ENCODE measurements at regions of chr20 and their contacts with region 1.

Region 1: GRCh38 chr20:35883778-35884540 is 70.3 kb downstream of the SCAND1 start:
- DNase-seq: peak; percentile 69 to 87 (median 77)
- H3K4me3 ChIP-seq: no peak overlapping the region
- H3K27ac ChIP-seq: peak overlapping the region; percentile 14 to 51
- H3K4me1 ChIP-seq: peaks cover 2% of the 10 kb centered on the region
- H3K27me3 ChIP-seq: no peaks in the 10 kb centered on the region
- CTCF ChIP-seq: peak; percentile 36 to 78 (median 73)
- EP300 ChIP-seq: peak; percentile 93
- POLR2A ChIP-seq: peak; percentile 11

Region 2: DNA sequence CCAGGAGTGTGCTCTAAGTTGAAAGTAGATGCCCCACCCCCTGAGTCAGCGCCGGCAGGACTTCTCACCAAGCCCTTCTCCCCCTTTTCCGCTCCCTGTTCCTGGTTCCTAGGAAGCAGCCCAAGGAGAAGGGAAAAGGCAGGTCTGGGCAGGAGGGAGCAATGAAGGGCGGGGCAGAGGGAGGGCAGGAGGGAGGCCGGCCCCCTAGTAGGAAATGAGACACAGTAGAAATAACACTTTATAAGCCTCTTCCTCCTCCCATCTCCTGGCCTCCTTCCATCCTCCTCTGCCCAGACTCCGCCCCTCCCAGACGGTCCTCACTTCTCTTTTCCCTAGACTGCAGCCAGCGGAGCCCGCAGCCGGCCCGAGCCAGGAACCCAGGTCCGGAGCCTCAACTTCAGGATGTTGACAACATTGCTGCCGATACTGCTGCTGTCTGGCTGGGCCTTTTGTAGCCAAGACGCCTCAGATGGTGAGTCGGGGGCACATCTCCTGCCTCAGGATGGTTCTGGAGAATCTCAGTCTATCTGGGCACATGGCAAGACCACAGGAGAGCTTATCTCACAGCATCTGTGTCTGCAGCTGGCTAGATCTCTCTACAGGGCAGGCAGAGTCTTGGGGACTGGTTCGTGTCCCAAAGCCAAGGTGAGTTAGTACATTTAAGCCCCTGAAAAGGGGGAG is 712.1 kb before region 1 on chr20 and contains the start of gene PROCR:
- intact Hi-C with region 1: loop called in 1 of 4 experiments (anchors 5 kb)
- DNase-seq: peak; percentile 86 to 89 (median 87)
- H3K4me3 ChIP-seq: peak within 1 kb of the TSS; percentile 33
- H3K27ac ChIP-seq: peak within 1 kb of the TSS in 1 of 2 donors; percentile 66
- H3K4me1 ChIP-seq: peaks cover 2% of the 10 kb centered on the region
- H3K27me3 ChIP-seq: no peaks in the 10 kb centered on the region
- CTCF ChIP-seq: no peak
- EP300 ChIP-seq: no peak
- POLR2A ChIP-seq: no peak
- total RNA-seq, gene PROCR: 9.1 to 38.4 (median 17.5) TPM

Region 3: GRCh38 chr20:35463455-35464300 is 420.3 kb before region 1 on chr20:
- intact Hi-C with region 1: loop called in 1 of 4 experiments (anchors 10 kb)
- DNase-seq: peak in 4 of 5 donors; percentile 39 to 72 (median 44)
- H3K4me3 ChIP-seq: no peak overlapping the region
- H3K27ac ChIP-seq: no peak overlapping the region
- H3K4me1 ChIP-seq: peaks cover 4% of the 10 kb centered on the region
- H3K27me3 ChIP-seq: no peaks in the 10 kb centered on the region
- CTCF ChIP-seq: peak; percentile 63 to 69 (median 63)
- EP300 ChIP-seq: no peak
- POLR2A ChIP-seq: no peak

Region 4: GRCh38 chr20:35601008-35601973 is 282.7 kb before region 1 on chr20:
- intact Hi-C with region 1: loop called in 1 of 4 experiments (anchors 10 kb)
- DNase-seq: peak; percentile 74 to 88 (median 82)
- H3K4me3 ChIP-seq: peak overlapping the region; percentile 38
- H3K27ac ChIP-seq: no peak overlapping the region
- H3K4me1 ChIP-seq: peaks cover 6% of the 10 kb centered on the region
- H3K27me3 ChIP-seq: no peaks in the 10 kb centered on the region
- CTCF ChIP-seq: peak in 2 of 3 donors; percentile 48 to 54
- EP300 ChIP-seq: no peak
- POLR2A ChIP-seq: no peak

Region 5: DNA sequence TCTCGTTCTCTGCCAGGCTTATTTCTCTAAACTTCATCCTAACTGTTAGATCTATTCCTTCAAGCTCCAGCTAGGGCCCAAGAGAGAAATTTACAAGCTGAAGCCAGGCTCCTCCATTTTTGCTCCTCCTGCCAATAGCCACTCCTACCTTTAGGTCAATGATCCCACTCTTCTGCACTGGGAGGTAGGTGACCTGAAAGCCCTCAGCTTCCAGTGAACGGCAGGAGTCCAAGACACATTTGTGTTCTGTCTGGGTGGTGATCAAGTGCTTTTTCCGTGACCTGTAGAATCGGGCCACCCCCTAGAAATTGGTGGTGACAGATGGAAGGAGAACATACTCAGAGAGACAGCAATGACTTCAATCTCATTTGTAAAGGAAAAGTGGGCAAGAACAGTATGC is 193.7 kb before region 1 on chr20:
- intact Hi-C with region 1: no loop called
- DNase-seq: no peak
- H3K4me3 ChIP-seq: no peak overlapping the region
- H3K27ac ChIP-seq: no peak overlapping the region
- H3K4me1 ChIP-seq: no peaks in the 10 kb centered on the region
- H3K27me3 ChIP-seq: no peaks in the 10 kb centered on the region
- CTCF ChIP-seq: no peak
- EP300 ChIP-seq: no peak
- POLR2A ChIP-seq: no peak

Measured in ovary (tissue), 10 donors.